ENCODE measurements at regions of chr14 and their contacts with region 1.

Region 1: GRCh38 chr14:70821584-70822529 is 12.5 kb upstream of the MAP3K9 start:
- DNase-seq: peak in 1 of 2 experiments; percentile 33
- H3K4me3 ChIP-seq: peak overlapping the region; percentile 74
- H3K27ac ChIP-seq: no peak overlapping the region
- H3K4me1 ChIP-seq: 0 out of 2 replicates have a peak, but pooled peaks cover 5% of the 10 kb centered on the region
- H3K27me3 ChIP-seq: peaks cover 30% of the 10 kb centered on the region; the same call in 1 of the 2 replicates
- CTCF ChIP-seq: no peak

Region 2: GRCh38 chr14:70622111-70622712 is 199.6 kb before region 1 on chr14:
- CTCF ChIA-PET with region 1: no interaction called
- POLR2A ChIA-PET with region 1: no interaction called
- intact Hi-C with region 1: loop called (anchors 1 kb)
- DNase-seq: peak in 1 of 2 experiments; percentile 54
- H3K4me3 ChIP-seq: no peak overlapping the region
- H3K27ac ChIP-seq: no peak overlapping the region
- H3K4me1 ChIP-seq: peaks cover under 1% of the 10 kb centered on the region; the same call in 1 of the 2 replicates
- H3K27me3 ChIP-seq: no peaks in the 10 kb centered on the region
- CTCF ChIP-seq: peak; percentile 94

Region 3: DNA sequence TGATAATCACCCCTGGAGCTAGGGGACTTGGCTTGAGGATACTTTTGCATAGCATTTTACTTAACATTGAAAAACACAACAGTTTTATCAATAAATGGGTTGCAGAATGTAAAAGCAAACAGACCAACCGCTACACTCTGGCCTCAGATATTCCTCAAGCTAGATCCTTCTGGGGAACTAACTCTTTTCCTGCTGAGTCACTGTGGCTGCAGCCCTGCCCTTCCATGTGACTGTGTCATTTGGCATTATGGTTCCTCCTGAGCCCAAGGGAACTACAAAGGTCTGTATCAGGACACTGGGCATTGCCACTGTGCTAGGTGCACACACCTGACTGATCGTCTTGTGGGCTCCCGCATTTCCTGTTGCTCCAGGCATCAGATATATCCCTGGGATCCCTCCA is 123.6 kb before region 1 on chr14:
- CTCF ChIA-PET with region 1: interaction called, 24 read pairs
- POLR2A ChIA-PET with region 1: no interaction called
- intact Hi-C with region 1: no loop called
- DNase-seq: peak; percentile 73 to 87
- H3K4me3 ChIP-seq: peak overlapping the region; percentile 22; the same call in 1 of the 2 replicates
- H3K27ac ChIP-seq: peak overlapping the region; percentile 97
- H3K4me1 ChIP-seq: peaks cover 45% of the 10 kb centered on the region
- H3K27me3 ChIP-seq: no peaks in the 10 kb centered on the region
- CTCF ChIP-seq: no peak

Region 4: GRCh38 chr14:70955543-70956480 is 134.0 kb after region 1 on chr14:
- CTCF ChIA-PET with region 1: no interaction called
- POLR2A ChIA-PET with region 1: no interaction called
- intact Hi-C with region 1: loop called (anchors 5 kb)
- DNase-seq: peak in 1 of 2 experiments; percentile 43
- H3K4me3 ChIP-seq: no peak overlapping the region
- H3K27ac ChIP-seq: no peak overlapping the region
- H3K4me1 ChIP-seq: no peaks in the 10 kb centered on the region
- H3K27me3 ChIP-seq: no peaks in the 10 kb centered on the region
- CTCF ChIP-seq: peak; percentile 66

Region 5: DNA sequence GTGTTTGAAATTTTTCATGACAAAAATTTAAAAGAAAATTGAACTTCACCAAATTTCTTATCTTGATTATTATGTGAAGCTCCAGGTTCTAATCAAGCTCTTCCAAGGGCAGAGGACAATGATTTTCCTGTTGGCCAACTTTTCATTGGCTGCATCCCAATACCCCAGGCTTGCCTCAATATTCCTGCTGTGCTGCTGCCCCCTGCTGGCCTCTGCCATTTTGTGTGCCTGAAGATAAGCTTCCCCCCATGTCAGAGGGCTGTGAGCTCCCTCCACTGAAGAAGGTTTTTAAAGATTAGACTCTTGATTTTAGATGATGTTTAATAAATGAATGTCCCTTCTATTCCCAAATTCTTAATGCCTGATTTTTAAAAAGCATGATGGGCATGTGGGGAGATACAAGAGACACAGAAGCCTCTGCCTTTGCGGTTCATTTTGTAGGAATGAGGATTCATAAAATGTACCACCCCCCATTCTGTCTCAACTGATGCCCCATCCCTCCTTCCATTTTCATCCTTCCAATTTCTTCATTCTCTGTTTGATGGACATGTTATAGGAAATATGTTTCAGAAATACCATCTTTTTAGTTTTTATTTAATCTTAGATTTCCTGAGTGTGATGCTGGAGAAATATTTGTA is 1033.7 kb after region 1 on chr14:
- CTCF ChIA-PET with region 1: no interaction called
- POLR2A ChIA-PET with region 1: no interaction called
- intact Hi-C with region 1: loop called (anchors 5 kb)
- DNase-seq: peak in 1 of 2 experiments; percentile 58
- H3K4me3 ChIP-seq: no peak overlapping the region
- H3K27ac ChIP-seq: no peak overlapping the region
- H3K4me1 ChIP-seq: no peaks in the 10 kb centered on the region
- H3K27me3 ChIP-seq: no peaks in the 10 kb centered on the region
- CTCF ChIP-seq: peak; percentile 73